Mucosa of descending colon (tissue), 3 donors: ENCODE measurements at regions of chr2 and their contacts with region 1.

Region 1: DNA sequence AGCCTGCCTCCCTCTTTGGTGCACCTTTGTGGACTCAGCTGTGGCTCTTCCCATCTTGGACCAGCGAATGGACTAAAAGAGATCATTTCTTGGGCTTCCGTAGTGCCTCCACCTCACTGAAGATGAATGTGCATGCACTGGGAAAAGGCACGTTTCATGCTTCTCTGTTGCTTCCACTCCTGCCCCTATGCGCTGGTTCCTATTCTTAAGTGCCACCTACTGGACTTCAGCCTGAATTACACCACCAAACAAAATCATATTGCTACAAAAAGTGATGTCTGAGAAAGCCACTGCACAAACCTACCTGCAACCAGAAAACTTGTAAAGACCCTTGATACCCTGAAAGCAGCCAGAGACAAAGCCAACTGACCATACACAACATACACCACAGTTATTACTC is 695.6 kb downstream of the TSN start:
- DNase-seq: peak in 1 of 3 donors; percentile 22
- ATAC-seq: peak; percentile 63
- H3K4me3 ChIP-seq: no peak overlapping the region
- H3K4me1 ChIP-seq: no peaks in the 10 kb centered on the region
- CTCF ChIP-seq: no peak

Region 2: DNA sequence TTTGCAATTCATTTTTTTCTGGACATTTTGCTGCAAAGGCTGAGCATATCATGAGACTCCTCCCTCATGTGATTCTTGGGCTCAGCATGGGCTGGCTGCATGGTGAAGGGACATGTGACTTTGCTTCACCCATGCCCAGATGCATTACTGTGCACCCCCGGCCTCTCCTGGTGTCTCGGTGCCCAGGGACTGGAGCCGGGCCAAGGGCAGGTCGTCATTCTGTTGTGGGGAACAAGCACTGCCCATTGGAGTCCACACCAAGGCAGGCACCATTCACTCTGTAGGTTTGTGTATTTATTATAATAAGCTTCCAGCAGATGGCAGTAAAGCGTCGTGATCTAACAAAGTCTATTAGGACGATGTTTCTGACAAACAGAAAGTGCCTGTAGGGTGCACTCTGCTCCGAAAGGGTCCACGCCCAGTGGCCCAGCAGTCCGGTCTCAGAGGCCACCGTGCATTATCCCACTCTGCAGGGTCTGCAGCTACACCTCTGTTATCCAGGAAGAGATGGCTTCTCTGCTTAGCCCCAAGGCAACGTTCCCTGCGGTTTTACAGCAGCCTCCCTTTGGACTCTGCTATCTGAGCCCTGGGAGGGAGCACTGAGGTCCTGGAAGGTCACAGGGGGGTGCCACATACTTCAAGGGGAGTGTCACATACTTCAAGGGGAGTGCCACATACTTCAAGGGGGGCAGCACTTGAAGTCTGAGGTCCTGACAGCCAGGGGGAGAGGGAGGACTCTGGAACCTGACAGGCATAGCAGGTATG is 476.0 kb before region 1 on chr2:
- intact Hi-C with region 1: loop called in 1 of 2 experiments (anchors 2 kb)
- DNase-seq: peak in 2 of 3 donors; percentile 49 to 65
- ATAC-seq: peak; percentile 93
- H3K4me3 ChIP-seq: no peak overlapping the region
- H3K4me1 ChIP-seq: no peaks in the 10 kb centered on the region
- CTCF ChIP-seq: peak; percentile 16

Region 3: GRCh38 chr2:122098301-122098700 is 352.7 kb before region 1 on chr2:
- intact Hi-C with region 1: no loop called
- DNase-seq: no peak
- ATAC-seq: no peak
- H3K4me3 ChIP-seq: no peak overlapping the region
- H3K4me1 ChIP-seq: no peaks in the 10 kb centered on the region
- CTCF ChIP-seq: no peak